ENCODE measurements at regions of chr6 and their contacts with region 1.

Region 1: DNA sequence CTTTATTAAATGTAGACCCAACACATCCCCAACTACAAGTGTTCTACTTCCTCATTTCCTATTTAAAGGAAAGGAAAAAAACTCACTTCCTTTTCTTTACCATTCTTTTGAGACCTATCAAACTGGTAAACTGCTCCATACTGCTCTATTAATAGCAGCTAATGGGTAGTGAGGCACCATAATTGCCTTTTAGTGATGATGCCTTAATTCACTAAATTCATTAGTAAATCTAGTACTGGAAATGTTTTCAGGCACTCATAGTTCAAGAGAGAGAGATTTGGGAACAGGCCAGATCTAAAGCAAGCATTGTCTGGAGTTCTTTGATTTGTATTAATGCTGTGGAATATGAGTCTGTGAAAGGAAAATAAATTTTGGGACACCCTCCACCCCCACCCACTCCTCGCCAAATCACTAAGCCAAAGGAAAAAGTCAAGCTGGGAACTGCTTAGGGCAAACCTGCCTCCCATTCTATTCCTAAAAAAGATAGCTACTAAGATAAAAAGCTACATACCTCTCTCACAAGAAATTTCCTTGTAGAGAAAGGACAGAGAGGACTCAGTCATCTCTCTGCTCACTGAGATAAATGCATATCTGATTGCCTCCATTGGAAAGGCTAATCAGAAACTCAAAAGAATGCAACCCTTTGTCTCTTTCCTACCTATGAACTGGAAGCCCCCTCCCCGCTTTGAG is 13.6 kb upstream of the IBTK start:
- DNase-seq: no peak
- H3K4me3 ChIP-seq: no peak overlapping the region
- H3K27ac ChIP-seq: peak overlapping the region in 1 of 5 donors; percentile 23
- H3K4me1 ChIP-seq: peaks cover 0 to 18% (median 0%) of the 10 kb centered on the region in 4 donors
- H3K27me3 ChIP-seq: no peaks in the 10 kb centered on the region
- CTCF ChIP-seq: no peak
- EP300 ChIP-seq: no peak
- POLR2A ChIP-seq: no peak

Region 2: GRCh38 chr6:82568290-82569014 is 307.3 kb after region 1 on chr6:
- intact Hi-C with region 1: no loop called
- DNase-seq: no peak
- H3K4me3 ChIP-seq: no peak overlapping the region
- H3K27ac ChIP-seq: no peak overlapping the region
- H3K4me1 ChIP-seq: no peaks in the 10 kb centered on the region
- H3K27me3 ChIP-seq: no peaks in the 10 kb centered on the region
- CTCF ChIP-seq: no peak
- EP300 ChIP-seq: no peak
- POLR2A ChIP-seq: no peak

Region 3: GRCh38 chr6:83057705-83058321 is 796.7 kb after region 1 on chr6:
- intact Hi-C with region 1: loop called (anchors 10 kb)
- DNase-seq: peak in 1 of 2 donors; percentile 82
- H3K4me3 ChIP-seq: no peak overlapping the region
- H3K27ac ChIP-seq: no peak overlapping the region
- H3K4me1 ChIP-seq: peaks cover 0 to 7% (median 3%) of the 10 kb centered on the region in 4 donors
- H3K27me3 ChIP-seq: no peaks in the 10 kb centered on the region
- CTCF ChIP-seq: peak in 5 of 7 experiments; percentile 34 to 61 (median 45)
- EP300 ChIP-seq: no peak
- POLR2A ChIP-seq: no peak

Measured in stomach (tissue), 19 donors.